Natural killer cell (primary cell): ENCODE measurements at regions of chr4 and their contacts with region 1.

Region 1: DNA sequence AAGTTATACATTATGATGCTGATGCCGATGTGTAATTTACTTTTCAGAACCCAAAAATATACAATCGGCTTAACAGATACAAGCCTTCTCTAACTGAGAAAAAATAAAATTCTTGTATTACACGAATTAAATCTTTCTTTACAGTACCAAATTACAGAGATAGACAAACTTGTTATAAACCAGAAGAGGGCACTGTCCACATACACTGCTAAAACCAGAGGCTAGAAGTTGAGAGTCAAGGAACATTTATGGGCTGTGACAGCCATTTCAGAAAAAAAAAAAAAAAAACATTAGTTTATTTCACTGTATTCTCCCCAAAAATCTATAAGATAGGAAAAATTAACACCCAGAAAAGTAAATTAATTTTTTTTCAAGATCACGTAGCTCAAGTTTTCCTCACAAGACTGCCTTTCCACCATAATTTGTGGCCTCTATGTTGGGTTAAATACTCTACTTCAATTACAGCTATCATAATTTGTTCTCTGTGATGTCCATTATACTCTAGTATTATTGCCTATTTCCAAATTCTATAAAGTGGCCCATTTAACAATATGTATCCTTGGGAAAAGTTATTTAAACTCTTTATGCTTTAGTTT is 12.0 kb downstream of the EREG start:
- DNase-seq: peak in 1 of 2 donors; percentile 70
- ATAC-seq: peak; percentile 70 to 86 (median 74)
- H3K4me3 ChIP-seq: no peak overlapping the region
- H3K4me3 Mint-ChIP-seq: no peak overlapping the region
- H3K27ac ChIP-seq: no peak overlapping the region
- H3K27ac Mint-ChIP-seq: no peak overlapping the region
- H3K4me1 ChIP-seq: no peaks in the 10 kb centered on the region
- H3K4me1 Mint-ChIP-seq: no peaks in the 10 kb centered on the region
- H3K27me3 ChIP-seq: peaks cover 2% of the 10 kb centered on the region
- H3K27me3 Mint-ChIP-seq: peaks cover 0 to 5% of the 10 kb centered on the region in 2 donors
- CTCF ChIP-seq: peak; percentile 86

Region 2: DNA sequence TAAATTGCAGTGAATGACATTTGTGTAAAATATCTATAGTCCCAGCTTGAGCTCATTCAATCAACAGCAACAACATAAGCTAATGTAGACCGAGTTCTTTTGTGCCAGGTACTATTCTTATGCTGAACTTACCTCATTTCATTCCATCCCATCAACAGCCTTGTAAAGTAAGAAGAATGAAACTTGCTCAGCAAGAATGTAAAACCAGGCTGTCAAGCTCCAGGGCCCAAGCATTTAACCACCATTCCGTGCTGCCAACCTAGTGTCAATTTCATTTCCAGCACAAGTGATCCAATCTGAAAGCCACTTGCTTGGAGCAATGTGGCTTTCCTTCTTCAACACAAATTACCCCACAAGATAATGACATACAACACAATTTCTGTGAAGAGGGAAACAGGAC is 793.3 kb before region 1 on chr4:
- intact Hi-C with region 1: no loop called
- DNase-seq: no peak
- ATAC-seq: no peak
- H3K4me3 ChIP-seq: no peak overlapping the region
- H3K4me3 Mint-ChIP-seq: no peak overlapping the region
- H3K27ac ChIP-seq: no peak overlapping the region
- H3K27ac Mint-ChIP-seq: no peak overlapping the region
- H3K4me1 ChIP-seq: no peaks in the 10 kb centered on the region
- H3K4me1 Mint-ChIP-seq: no peaks in the 10 kb centered on the region
- H3K27me3 ChIP-seq: no peaks in the 10 kb centered on the region
- H3K27me3 Mint-ChIP-seq: no peaks in the 10 kb centered on the region
- CTCF ChIP-seq: no peak

Region 3: DNA sequence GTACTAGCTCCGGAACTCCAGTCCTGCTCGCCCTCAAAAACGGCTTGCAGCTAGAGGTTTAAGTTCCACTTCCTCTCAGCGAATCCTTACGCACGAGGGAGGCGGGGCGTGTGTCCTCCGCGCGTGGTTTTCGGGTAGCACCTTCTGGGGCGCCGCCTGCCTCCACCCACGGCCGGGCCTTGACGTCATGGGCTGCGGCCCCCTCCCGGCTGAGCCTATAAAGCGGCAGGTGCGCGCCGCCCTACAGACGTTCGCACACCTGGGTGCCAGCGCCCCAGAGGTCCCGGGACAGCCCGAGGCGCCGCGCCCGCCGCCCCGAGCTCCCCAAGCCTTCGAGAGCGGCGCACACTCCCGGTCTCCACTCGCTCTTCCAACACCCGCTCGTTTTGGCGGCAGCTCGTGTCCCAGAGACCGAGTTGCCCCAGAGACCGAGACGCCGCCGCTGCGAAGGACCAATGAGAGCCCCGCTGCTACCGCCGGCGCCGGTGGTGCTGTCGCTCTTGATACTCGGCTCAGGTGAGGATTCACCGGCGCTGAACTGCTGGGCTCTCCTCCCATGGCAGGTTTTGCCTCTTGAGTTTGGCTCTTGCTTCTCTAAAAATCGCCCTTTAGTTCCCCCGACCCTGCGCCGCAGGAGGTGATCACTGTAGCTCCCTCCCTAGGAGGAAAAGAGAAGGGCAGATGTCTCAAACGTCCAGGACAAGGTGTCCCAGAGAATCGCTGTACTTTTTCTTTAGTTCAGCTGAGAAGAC is 68.1 kb after region 1 on chr4 and contains the start of gene AREG:
- intact Hi-C with region 1: loop called (anchors 1 kb)
- DNase-seq: peak; percentile 91 to 96
- ATAC-seq: peak; percentile 94 to 96 (median 94)
- H3K4me3 ChIP-seq: peak within 1 kb of the TSS; percentile 85
- H3K4me3 Mint-ChIP-seq: peak within 1 kb of the TSS; percentile 90
- H3K27ac ChIP-seq: peak within 1 kb of the TSS; percentile 95
- H3K27ac Mint-ChIP-seq: peak within 1 kb of the TSS; percentile 90 to 95
- H3K4me1 ChIP-seq: peaks cover 7% of the 10 kb centered on the region
- H3K4me1 Mint-ChIP-seq: peaks cover 6 to 16% of the 10 kb centered on the region in 2 donors
- H3K27me3 ChIP-seq: no peaks in the 10 kb centered on the region
- H3K27me3 Mint-ChIP-seq: no peaks in the 10 kb centered on the region
- CTCF ChIP-seq: peak; percentile 62
- total RNA-seq, gene AREG: 11.3 to 47.2 (median 38.2) TPM

Region 4: GRCh38 chr4:74531963-74532794 is 155.2 kb after region 1 on chr4:
- intact Hi-C with region 1: loop called (anchors 1 kb)
- DNase-seq: peak in 1 of 2 donors; percentile 62
- ATAC-seq: peak; percentile 70 to 75 (median 72)
- H3K4me3 ChIP-seq: no peak overlapping the region
- H3K4me3 Mint-ChIP-seq: no peak overlapping the region
- H3K27ac ChIP-seq: no peak overlapping the region
- H3K27ac Mint-ChIP-seq: no peak overlapping the region
- H3K4me1 ChIP-seq: no peaks in the 10 kb centered on the region
- H3K4me1 Mint-ChIP-seq: no peaks in the 10 kb centered on the region
- H3K27me3 ChIP-seq: no peaks in the 10 kb centered on the region
- H3K27me3 Mint-ChIP-seq: peaks cover 0 to under 1% of the 10 kb centered on the region in 2 donors
- CTCF ChIP-seq: peak; percentile 61

Region 5: GRCh38 chr4:74623041-74623440 is 246.1 kb after region 1 on chr4:
- intact Hi-C with region 1: loop called (anchors 1 kb)
- DNase-seq: peak in 1 of 2 donors; percentile 57
- ATAC-seq: peak; percentile 43 to 59 (median 52)
- H3K4me3 ChIP-seq: no peak overlapping the region
- H3K4me3 Mint-ChIP-seq: no peak overlapping the region
- H3K27ac ChIP-seq: no peak overlapping the region
- H3K27ac Mint-ChIP-seq: no peak overlapping the region
- H3K4me1 ChIP-seq: no peaks in the 10 kb centered on the region
- H3K4me1 Mint-ChIP-seq: peaks cover 20 to 27% of the 10 kb centered on the region in 2 donors
- H3K27me3 ChIP-seq: peaks cover 2% of the 10 kb centered on the region
- H3K27me3 Mint-ChIP-seq: no peaks in the 10 kb centered on the region
- CTCF ChIP-seq: peak; percentile 14

Region 6: DNA sequence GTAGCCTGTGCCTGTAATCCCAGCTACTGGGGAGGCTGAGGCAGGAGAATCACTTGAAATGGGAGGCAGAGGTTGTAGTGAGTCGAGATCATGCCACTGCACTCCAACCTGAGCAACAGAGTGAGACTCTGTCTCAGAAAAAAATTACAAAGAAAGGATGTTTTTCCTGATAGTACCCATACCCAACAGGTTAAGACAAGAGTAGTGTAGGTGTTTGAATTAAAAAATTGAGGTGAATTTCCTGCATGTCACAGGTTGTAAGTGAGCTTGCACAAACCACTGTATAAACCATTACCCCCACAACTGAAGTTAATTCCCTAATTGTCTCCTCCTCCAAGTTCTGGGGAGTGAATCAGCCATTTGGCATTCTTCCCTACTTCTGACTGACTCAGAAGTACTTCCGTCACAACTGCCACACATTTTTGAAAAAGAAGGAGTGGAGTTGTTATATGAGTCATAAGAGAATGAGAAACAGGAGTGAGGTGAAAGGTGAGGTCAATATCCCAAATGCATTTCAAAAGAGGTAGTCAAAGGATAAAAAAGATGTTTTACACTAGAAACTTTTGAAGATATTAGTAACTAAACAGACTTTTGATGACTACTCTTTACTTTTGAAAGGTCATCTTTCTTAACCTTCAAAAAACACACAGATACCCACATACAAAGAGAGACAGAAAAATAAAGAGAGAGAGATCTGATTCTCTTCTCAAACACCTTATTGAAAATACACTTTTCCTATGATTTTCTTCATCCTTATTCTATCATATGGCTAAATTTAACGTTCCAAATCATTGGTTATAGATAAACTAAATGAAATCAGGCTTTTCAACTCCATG is 282.8 kb after region 1 on chr4:
- intact Hi-C with region 1: no loop called
- DNase-seq: peak in 1 of 2 donors; percentile 3
- ATAC-seq: no peak
- H3K4me3 ChIP-seq: no peak overlapping the region
- H3K4me3 Mint-ChIP-seq: no peak overlapping the region
- H3K27ac ChIP-seq: no peak overlapping the region
- H3K27ac Mint-ChIP-seq: no peak overlapping the region
- H3K4me1 ChIP-seq: no peaks in the 10 kb centered on the region
- H3K4me1 Mint-ChIP-seq: no peaks in the 10 kb centered on the region
- H3K27me3 ChIP-seq: no peaks in the 10 kb centered on the region
- H3K27me3 Mint-ChIP-seq: no peaks in the 10 kb centered on the region
- CTCF ChIP-seq: no peak

Region 7: GRCh38 chr4:74675673-74676279 is 298.8 kb after region 1 on chr4:
- intact Hi-C with region 1: loop called (anchors 2 kb)
- DNase-seq: peak in 1 of 2 donors; percentile 57
- ATAC-seq: peak in 2 of 3 donors; percentile 41 to 56
- H3K4me3 ChIP-seq: no peak overlapping the region
- H3K4me3 Mint-ChIP-seq: no peak overlapping the region
- H3K27ac ChIP-seq: no peak overlapping the region
- H3K27ac Mint-ChIP-seq: no peak overlapping the region
- H3K4me1 ChIP-seq: no peaks in the 10 kb centered on the region
- H3K4me1 Mint-ChIP-seq: no peaks in the 10 kb centered on the region
- H3K27me3 ChIP-seq: no peaks in the 10 kb centered on the region
- H3K27me3 Mint-ChIP-seq: peaks cover 0 to 8% of the 10 kb centered on the region in 2 donors
- CTCF ChIP-seq: peak; percentile 32